ENCODE measurements at regions of chr7 and their contacts with region 1.

Region 1: DNA sequence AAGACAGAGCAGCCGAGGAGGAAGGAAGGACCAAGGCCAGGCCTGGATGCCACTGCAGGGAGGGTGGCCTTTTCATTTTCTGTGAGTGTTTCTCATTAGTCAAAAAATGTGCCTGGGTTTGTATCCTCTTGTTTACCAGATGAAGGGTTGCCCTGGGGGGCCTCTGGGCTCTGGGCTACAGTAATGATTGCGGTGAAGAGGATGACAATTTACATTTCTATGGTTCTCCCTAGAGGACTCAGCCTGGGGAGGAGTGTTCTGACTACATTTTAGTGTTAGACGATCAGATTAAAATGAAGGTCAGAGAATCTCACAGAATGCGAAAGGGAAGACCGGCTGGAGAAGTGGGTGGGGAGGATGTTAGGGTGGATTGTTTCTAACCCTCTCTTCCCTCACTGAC is 108.0 kb upstream of the KMT2C start:
- DNase-seq: peak; percentile 51
- ATAC-seq: peak; percentile 84
- H3K4me3 Mint-ChIP-seq: peak overlapping the region; percentile 65
- H3K27ac Mint-ChIP-seq: peak overlapping the region; percentile 97
- H3K4me1 Mint-ChIP-seq: peaks cover 38% of the 10 kb centered on the region
- H3K27me3 Mint-ChIP-seq: no peaks in the 10 kb centered on the region; the same call in 1 of the 2 replicates
- CTCF ChIP-seq: no peak

Region 2: DNA sequence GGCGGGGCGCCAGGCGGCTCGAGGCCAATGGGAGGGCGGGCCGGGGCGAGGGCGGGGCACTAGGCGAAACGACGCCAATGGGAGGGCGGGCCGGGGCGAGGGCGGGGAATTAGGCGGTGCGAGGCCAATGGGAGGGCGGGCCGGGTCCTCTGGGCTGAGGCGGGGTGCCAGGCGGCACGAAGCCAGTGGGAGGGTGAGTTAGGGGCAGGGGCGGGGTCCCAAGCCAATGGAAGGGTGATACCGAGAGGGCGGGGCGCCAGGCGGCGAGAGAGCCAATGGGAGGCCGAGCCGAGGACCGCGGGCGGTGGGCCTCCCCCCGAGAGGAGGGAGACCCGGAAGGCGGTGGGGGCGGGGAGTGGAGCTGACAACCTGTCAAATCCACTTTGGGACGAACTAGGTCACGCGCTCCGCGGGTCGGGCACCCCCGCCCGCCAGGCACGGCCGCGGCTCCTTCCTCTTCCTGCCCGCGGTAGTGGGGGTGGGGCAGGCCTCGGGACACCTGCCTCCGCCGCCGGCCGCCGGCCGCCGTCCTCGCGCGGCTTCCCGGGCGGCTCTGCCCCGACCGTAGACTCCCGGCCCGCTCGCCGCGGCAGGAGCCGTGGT is 80.0 kb before region 1 on chr7:
- CTCF ChIA-PET with region 1: no interaction called
- POLR2A ChIA-PET with region 1: interaction called, 15 read pairs
- DNase-seq: peak; percentile 99
- ATAC-seq: peak; percentile 96
- H3K4me3 Mint-ChIP-seq: peak overlapping the region; percentile 93
- H3K27ac Mint-ChIP-seq: no peak overlapping the region
- H3K4me1 Mint-ChIP-seq: peaks cover 27% of the 10 kb centered on the region
- H3K27me3 Mint-ChIP-seq: peaks cover 7% of the 10 kb centered on the region; the same call in 1 of the 2 replicates
- CTCF ChIP-seq: no peak

Measured in WTC11 (cell line).